ENCODE measurements at regions of chr3 and their contacts with region 1.

Region 1: GRCh38 chr3:71045917-71046282 is 537.6 kb downstream of the FOXP1 start:
- DNase-seq: no peak
- H3K4me3 ChIP-seq: no peak overlapping the region
- H3K27ac ChIP-seq: peak overlapping the region; percentile 36 to 97 (median 72)
- H3K4me1 ChIP-seq: peaks cover 0 to 98% (median 72%) of the 10 kb centered on the region in 4 donors
- H3K27me3 ChIP-seq: no peaks in the 10 kb centered on the region
- CTCF ChIP-seq: no peak
- EP300 ChIP-seq: no peak
- POLR2A ChIP-seq: no peak

Region 2: DNA sequence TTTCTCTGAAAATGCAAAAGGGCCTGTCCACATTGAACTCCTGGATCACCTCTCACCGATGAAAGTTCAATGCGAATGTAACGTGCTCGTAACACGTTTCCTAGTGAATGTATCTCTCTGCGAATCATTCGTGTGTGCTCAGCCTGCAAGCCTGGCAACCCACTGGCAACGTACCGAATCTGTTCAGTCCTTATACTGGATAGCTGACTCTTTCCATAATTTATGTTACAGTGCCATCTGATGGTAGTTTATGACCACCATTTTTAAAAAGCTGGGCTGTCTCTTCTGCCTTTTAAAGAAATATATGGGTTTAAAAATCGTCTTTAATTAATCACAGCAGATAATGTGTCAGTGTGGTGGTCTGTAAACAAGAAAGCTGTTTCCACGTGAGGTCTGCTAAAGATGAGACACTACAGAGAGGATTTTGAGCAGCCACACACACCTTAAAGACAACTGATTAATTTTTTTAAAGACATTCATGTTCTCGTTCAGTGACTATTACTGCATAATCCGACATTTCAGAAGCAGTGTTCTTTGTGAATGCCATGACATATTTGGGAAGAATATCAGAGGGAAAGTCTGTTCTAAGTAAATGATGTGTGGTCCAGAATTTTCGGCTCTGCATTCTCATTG is 607.0 kb after region 1 on chr3:
- intact Hi-C with region 1: loop called (anchors 10 kb)
- DNase-seq: peak; percentile 80
- H3K4me3 ChIP-seq: peak overlapping the region in 2 of 4 donors; percentile 23 to 29
- H3K27ac ChIP-seq: peak overlapping the region; percentile 11 to 58 (median 29)
- H3K4me1 ChIP-seq: peaks cover 0 to 23% (median 16%) of the 10 kb centered on the region in 4 donors
- H3K27me3 ChIP-seq: no peaks in the 10 kb centered on the region
- CTCF ChIP-seq: peak; percentile 25 to 43 (median 30)
- EP300 ChIP-seq: no peak
- POLR2A ChIP-seq: no peak